Esophagus muscularis mucosa (tissue), 4 donors: ENCODE measurements at regions of chr9 and their contacts with region 1.

Region 1: DNA sequence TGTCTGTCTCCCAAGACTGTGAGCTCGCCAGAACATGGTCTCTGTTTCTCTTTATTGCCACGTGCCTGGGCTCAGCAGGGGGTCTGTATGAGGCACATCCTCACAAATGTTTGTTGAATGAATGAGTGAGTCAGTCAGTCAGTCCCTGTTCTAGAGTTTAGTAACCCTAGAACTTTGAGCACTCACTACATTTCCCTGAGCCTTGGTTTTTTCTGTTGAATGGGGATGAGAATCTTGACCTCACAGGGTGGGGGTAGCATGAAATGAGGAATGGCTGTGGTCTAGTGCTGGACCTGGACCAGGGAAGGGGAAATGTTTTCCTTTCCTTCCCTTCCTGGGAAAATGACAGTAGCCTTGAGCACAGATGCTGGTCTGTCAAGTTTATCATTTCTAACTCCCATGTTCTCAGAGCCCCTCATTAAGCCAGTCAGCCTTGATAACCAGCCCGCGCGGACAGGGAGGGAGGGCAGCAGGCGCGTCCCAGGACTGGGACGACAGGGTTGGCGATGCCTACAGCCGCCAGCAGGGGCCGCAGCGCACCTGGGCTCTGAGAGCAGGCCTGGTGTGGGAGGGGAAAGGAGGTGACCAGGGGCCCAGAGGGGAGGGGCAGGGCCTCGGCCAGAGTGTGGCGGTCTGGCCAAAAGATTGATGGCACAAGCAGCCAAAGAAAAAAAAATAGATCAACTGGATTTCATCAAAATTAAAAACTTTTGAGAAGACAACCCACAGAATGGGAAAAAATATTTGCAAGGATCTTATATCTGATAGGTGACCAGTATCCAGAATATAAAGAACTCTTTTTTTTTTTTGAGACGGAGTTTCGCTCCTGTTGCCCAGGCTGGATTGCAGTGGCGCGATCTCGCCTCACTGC is 24.1 kb upstream of the WNK2 start:
- DNase-seq: no peak
- H3K4me3 ChIP-seq: no peak overlapping the region
- H3K27ac ChIP-seq: no peak overlapping the region
- H3K4me1 ChIP-seq: peaks cover 18 to 33% (median 29%) of the 10 kb centered on the region in 4 donors
- H3K27me3 ChIP-seq: no peaks in the 10 kb centered on the region
- CTCF ChIP-seq: peak; percentile 98 to 99 (median 98)
- EP300 ChIP-seq: no peak
- POLR2A ChIP-seq: no peak

Region 2: GRCh38 chr9:93207326-93207814 is 47.5 kb after region 1 on chr9:
- intact Hi-C with region 1: no loop called
- DNase-seq: no peak
- H3K4me3 ChIP-seq: peak overlapping the region in 3 of 4 donors; percentile 16 to 42 (median 20)
- H3K27ac ChIP-seq: peak overlapping the region; percentile 79 to 86 (median 84)
- H3K4me1 ChIP-seq: peaks cover 65 to 89% (median 71%) of the 10 kb centered on the region in 4 donors
- H3K27me3 ChIP-seq: no peaks in the 10 kb centered on the region
- CTCF ChIP-seq: peak; percentile 9 to 40 (median 10)
- EP300 ChIP-seq: no peak
- POLR2A ChIP-seq: no peak

Region 3: GRCh38 chr9:93575796-93576257 is 416.0 kb after region 1 on chr9:
- intact Hi-C with region 1: loop called (anchors 10 kb)
- DNase-seq: peak; percentile 92
- H3K4me3 ChIP-seq: peak overlapping the region; percentile 84 to 96 (median 91)
- H3K27ac ChIP-seq: peak overlapping the region; percentile 92 to 97 (median 94)
- H3K4me1 ChIP-seq: peaks cover 41 to 56% (median 51%) of the 10 kb centered on the region in 4 donors
- H3K27me3 ChIP-seq: no peaks in the 10 kb centered on the region
- CTCF ChIP-seq: no peak
- EP300 ChIP-seq: no peak
- POLR2A ChIP-seq: no peak